ENCODE measurements at regions of chr15 and their contacts with region 1.

Region 1: GRCh38 chr15:60649845-60650548 is 171.1 kb upstream of the ICE2 start:
- DNase-seq: peak; percentile 46
- H3K4me3 Mint-ChIP-seq: peak overlapping the region; percentile 70
- H3K27ac Mint-ChIP-seq: peak overlapping the region; percentile 89
- H3K4me1 Mint-ChIP-seq: peaks cover 69% of the 10 kb centered on the region
- H3K27me3 Mint-ChIP-seq: peaks cover under 1% of the 10 kb centered on the region

Region 2: GRCh38 chr15:60397772-60398445 is 252.1 kb before region 1 on chr15 and contains the start of gene ANXA2:
- intact Hi-C with region 1: loop called (anchors 10 kb)
- DNase-seq: peak; percentile 80
- H3K4me3 Mint-ChIP-seq: peak within 1 kb of the TSS; percentile 97
- H3K27ac Mint-ChIP-seq: peak within 1 kb of the TSS; percentile 97
- H3K4me1 Mint-ChIP-seq: peaks cover 56% of the 10 kb centered on the region
- H3K27me3 Mint-ChIP-seq: no peaks in the 10 kb centered on the region
- total RNA-seq, gene ANXA2: 243 and 247 TPM in 2 replicates

Region 3: GRCh38 chr15:60592371-60593169 is 57.4 kb before region 1 on chr15:
- intact Hi-C with region 1: loop called (anchors 1 kb)
- DNase-seq: peak; percentile 84
- H3K4me3 Mint-ChIP-seq: peak overlapping the region; percentile 83
- H3K27ac Mint-ChIP-seq: peak overlapping the region; percentile 68
- H3K4me1 Mint-ChIP-seq: peaks cover 69% of the 10 kb centered on the region
- H3K27me3 Mint-ChIP-seq: peaks cover 2% of the 10 kb centered on the region

Region 4: GRCh38 chr15:60695713-60696522 is 45.9 kb after region 1 on chr15:
- intact Hi-C with region 1: loop called (anchors 1 kb)
- DNase-seq: peak; percentile 48
- H3K4me3 Mint-ChIP-seq: peak overlapping the region; percentile 32
- H3K27ac Mint-ChIP-seq: peak overlapping the region; percentile 75
- H3K4me1 Mint-ChIP-seq: peaks cover 66% of the 10 kb centered on the region
- H3K27me3 Mint-ChIP-seq: no peaks in the 10 kb centered on the region

Region 5: DNA sequence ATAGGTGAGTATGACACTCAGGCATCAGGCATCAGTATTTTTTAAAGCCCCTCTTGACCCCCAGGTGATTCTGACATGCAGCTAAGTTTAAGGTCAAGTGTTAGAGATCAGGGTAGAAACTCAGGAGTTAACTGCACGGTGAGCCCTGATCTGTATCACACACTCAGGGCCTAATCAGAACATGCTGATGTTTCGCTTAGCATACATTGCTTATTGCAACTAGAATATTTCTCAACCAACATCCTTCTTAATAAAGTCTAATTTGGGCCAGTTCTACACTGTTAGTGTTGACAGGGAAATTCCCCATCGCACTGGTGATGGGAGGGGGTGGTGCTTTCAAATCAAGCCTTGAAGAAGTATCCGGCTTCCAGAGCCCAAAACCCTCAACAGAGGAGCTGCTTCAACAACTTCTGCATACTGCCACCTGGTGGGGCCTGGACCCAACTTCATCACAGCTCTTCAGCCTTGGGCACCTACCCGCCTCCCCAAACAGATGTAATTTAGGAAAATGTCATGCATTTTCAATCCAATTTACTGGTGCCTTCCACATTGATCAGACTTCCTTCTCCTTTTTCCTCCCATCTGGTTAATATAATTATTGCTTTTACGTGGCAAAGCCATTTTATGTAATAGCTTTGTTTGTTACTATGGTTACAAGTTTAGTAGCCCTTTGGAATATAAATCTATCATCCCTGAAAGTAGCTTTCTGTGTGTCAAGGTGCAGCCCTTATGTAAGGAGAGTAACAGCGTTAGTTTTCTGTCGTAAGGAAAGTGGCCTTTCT is 266.9 kb after region 1 on chr15:
- intact Hi-C with region 1: loop called (anchors 1 kb)
- DNase-seq: peak; percentile 80
- H3K4me3 Mint-ChIP-seq: peak overlapping the region; percentile 17
- H3K27ac Mint-ChIP-seq: peak overlapping the region; percentile 64
- H3K4me1 Mint-ChIP-seq: peaks cover 32% of the 10 kb centered on the region
- H3K27me3 Mint-ChIP-seq: peaks cover 2% of the 10 kb centered on the region

Measured in activated T-helper 1 cell treated with anti-CD3 and anti-CD28 coated beads, Interleukin-12 subunit alpha, Interleukin-12 subunit beta, Interleukin-2, Interleukin-4 antibody, amounts not matched to agents 30 ng/mL and 10 ng/mL and 1 ng/mL, durations not matched to agents 14 hours and 24 hours and 36 hours (primary cell).